GM12878 (cell line): ENCODE measurements at regions of chr11 and their contacts with region 1.

Region 1: GRCh38 chr11:22787551-22788162 is 41.9 kb downstream of the SVIP start:
- DNase-seq: no peak
- ATAC-seq: peak; percentile 52
- H3K4me3 ChIP-seq: no peak overlapping the region
- H3K27ac ChIP-seq: peak overlapping the region; percentile 63; the same call in 1 of the 2 replicates
- H3K4me1 ChIP-seq: peaks cover 13% of the 10 kb centered on the region
- H3K27me3 ChIP-seq: no peaks in the 10 kb centered on the region
- CTCF ChIP-seq: peak; percentile 60 to 81 (median 72)
- EP300 ChIP-seq: no peak
- POLR2A ChIP-seq: no peak
- RAD21 ChIP-seq: peak; percentile 90

Region 2: DNA sequence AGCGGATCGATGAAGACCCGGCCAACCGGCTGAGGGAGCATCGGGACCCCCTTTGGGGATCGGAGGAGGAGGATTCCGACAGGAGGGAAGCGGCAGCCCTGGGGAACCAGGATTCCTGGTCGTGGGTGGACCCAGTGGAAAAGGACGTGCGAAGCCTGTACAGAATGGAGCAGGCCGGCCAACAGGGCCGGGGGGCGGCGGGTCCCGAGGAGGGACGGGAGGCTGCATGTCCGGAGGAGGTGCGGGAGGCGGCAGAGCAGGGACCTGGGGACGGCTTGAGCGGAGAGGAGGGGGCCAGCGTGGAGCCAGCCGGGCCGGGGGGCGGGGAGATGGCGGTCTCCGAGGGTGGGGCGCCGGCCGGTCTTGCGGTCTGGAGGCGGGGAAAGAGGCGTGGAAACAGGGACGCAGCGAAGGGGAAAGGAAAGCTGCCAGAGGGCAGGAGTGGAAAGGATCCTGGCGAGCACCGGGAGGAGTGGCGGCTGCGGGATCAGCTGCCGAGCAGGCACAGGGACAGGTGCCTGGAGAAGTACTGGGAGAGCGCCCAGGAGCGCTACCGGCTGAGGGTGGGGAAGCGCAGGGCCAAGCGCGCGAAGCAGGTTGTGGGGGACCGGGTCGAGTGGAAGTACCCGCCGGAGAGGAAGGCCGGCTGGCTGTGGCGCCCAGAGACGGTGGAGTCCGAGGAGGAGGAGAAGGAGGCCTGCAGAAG is 594.9 kb before region 1 on chr11 and contains the start of gene ANO5:
- CTCF ChIA-PET with region 1: interaction called, 3 read pairs
- POLR2A ChIA-PET with region 1: no interaction called
- RAD21 ChIA-PET with region 1: no interaction called
- SMC1A ChIA-PET with region 1: interaction called, 4 read pairs
- in situ Hi-C with region 1: no loop called
- intact Hi-C with region 1: loop called (anchors 10 kb)
- DNase-seq: no peak
- ATAC-seq: peak; percentile 75
- H3K4me3 ChIP-seq: peak within 1 kb of the TSS; percentile 60
- H3K27ac ChIP-seq: no peak within 1 kb of the TSS
- H3K4me1 ChIP-seq: no peaks in the 10 kb centered on the region
- H3K27me3 ChIP-seq: no peaks in the 10 kb centered on the region
- CTCF ChIP-seq: no peak
- EP300 ChIP-seq: no peak
- POLR2A ChIP-seq: peak; percentile 48; the same call in 1 of the 2 replicates
- RAD21 ChIP-seq: no peak
- polyA plus RNA-seq, gene ANO5: 1.6 to 3.1 TPM

Region 3: GRCh38 chr11:22567759-22568158 is 219.9 kb before region 1 on chr11:
- CTCF ChIA-PET with region 1: no interaction called
- POLR2A ChIA-PET with region 1: no interaction called
- RAD21 ChIA-PET with region 1: no interaction called
- SMC1A ChIA-PET with region 1: no interaction called
- in situ Hi-C with region 1: no loop called
- intact Hi-C with region 1: no loop called
- DNase-seq: no peak
- ATAC-seq: no peak
- H3K4me3 ChIP-seq: no peak overlapping the region
- H3K27ac ChIP-seq: no peak overlapping the region
- H3K4me1 ChIP-seq: no peaks in the 10 kb centered on the region
- H3K27me3 ChIP-seq: no peaks in the 10 kb centered on the region
- CTCF ChIP-seq: no peak
- EP300 ChIP-seq: no peak
- POLR2A ChIP-seq: no peak
- RAD21 ChIP-seq: no peak

Region 4: DNA sequence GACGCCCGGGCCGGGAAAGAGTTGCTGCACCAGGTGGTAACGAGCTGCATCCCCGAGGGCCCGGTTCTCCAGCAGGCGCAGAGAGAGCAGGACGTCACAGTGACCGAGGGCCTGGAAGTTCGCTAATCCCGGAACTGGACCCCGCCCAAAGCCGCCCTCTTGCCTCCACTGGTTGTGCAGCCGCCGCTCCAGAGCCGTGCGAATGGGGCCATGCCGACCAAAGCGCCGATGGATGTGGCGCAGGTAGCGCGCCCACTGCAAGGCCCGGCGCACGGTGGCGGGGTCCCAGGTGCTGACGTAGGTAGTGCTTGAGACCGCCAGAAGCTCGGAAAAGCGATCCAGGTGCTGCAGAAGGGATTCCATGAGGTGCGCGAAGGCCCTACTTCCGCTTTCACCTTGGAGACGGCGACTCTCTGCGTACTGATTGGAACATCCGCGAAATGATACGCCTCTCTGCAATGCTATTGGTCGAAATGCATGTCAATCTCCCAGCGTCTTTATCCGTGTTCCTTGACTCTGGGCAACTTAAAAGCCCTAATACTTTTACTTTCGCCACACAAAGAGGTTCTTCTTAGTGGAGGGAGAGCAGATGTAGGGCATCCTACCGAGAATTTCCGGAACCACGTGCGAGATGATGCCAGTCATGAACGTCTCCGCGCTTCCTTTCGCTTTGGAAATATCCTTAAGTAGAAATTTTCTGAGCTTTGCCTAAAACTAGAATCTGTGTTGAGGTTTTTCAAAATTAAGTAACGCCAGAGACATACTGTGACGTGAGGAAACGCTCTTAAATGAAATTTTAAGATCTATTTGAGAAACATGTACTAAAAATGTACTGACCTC is 162.0 kb before region 1 on chr11 and contains the start of gene FANCF:
- CTCF ChIA-PET with region 1: interaction called, 23 read pairs
- POLR2A ChIA-PET with region 1: interaction called, 11 read pairs
- RAD21 ChIA-PET with region 1: interaction called, 4 read pairs
- SMC1A ChIA-PET with region 1: interaction called, 7 read pairs
- in situ Hi-C with region 1: no loop called
- intact Hi-C with region 1: loop called (anchors 2 kb)
- DNase-seq: peak; percentile 100
- ATAC-seq: peak; percentile 95
- H3K4me3 ChIP-seq: peak within 1 kb of the TSS; percentile 85
- H3K27ac ChIP-seq: peak within 1 kb of the TSS; percentile 90
- H3K4me1 ChIP-seq: peaks cover 6% of the 10 kb centered on the region; the same call in 1 of the 2 replicates
- H3K27me3 ChIP-seq: no peaks in the 10 kb centered on the region
- CTCF ChIP-seq: no peak
- EP300 ChIP-seq: no peak
- POLR2A ChIP-seq: peak; percentile 81
- RAD21 ChIP-seq: no peak
- polyA plus RNA-seq, gene FANCF: 1.6 to 3.4 TPM

Region 5: GRCh38 chr11:22677153-22677903 is 110.3 kb before region 1 on chr11:
- CTCF ChIA-PET with region 1: interaction called, 135 read pairs
- POLR2A ChIA-PET with region 1: interaction called, 4 read pairs
- RAD21 ChIA-PET with region 1: interaction called, 103 read pairs
- SMC1A ChIA-PET with region 1: interaction called, 251 read pairs
- in situ Hi-C with region 1: loop called (anchors 10 kb)
- intact Hi-C with region 1: no loop called
- DNase-seq: no peak
- ATAC-seq: peak; percentile 55
- H3K4me3 ChIP-seq: no peak overlapping the region
- H3K27ac ChIP-seq: no peak overlapping the region; the same call in 1 of the 2 replicates
- H3K4me1 ChIP-seq: no peaks in the 10 kb centered on the region
- H3K27me3 ChIP-seq: no peaks in the 10 kb centered on the region
- CTCF ChIP-seq: no peak
- EP300 ChIP-seq: no peak
- POLR2A ChIP-seq: no peak
- RAD21 ChIP-seq: no peak

Region 6: GRCh38 chr11:22725079-22725478 is 62.6 kb before region 1 on chr11:
- CTCF ChIA-PET with region 1: interaction called, 31 read pairs
- POLR2A ChIA-PET with region 1: interaction called, 3 read pairs
- RAD21 ChIA-PET with region 1: interaction called, 59 read pairs
- SMC1A ChIA-PET with region 1: interaction called, 49 read pairs
- in situ Hi-C with region 1: no loop called
- intact Hi-C with region 1: loop called (anchors 2 kb)
- DNase-seq: no peak
- ATAC-seq: no peak
- H3K4me3 ChIP-seq: no peak overlapping the region
- H3K27ac ChIP-seq: no peak overlapping the region
- H3K4me1 ChIP-seq: no peaks in the 10 kb centered on the region
- H3K27me3 ChIP-seq: no peaks in the 10 kb centered on the region
- CTCF ChIP-seq: no peak
- EP300 ChIP-seq: no peak
- POLR2A ChIP-seq: no peak
- RAD21 ChIP-seq: no peak

Region 7: GRCh38 chr11:22774716-22775115 is 12.9 kb before region 1 on chr11:
- CTCF ChIA-PET with region 1: interaction called, 77 read pairs
- POLR2A ChIA-PET with region 1: interaction called, 17 read pairs
- RAD21 ChIA-PET with region 1: interaction called, 47 read pairs
- SMC1A ChIA-PET with region 1: interaction called, 41 read pairs
- in situ Hi-C with region 1: no loop called
- intact Hi-C with region 1: no loop called
- DNase-seq: no peak
- ATAC-seq: peak; percentile 64
- H3K4me3 ChIP-seq: 0 out of 2 replicates have a peak overlapping the region, but pooled peaks have one; percentile 26
- H3K27ac ChIP-seq: peak overlapping the region; percentile 45
- H3K4me1 ChIP-seq: peaks cover 3% of the 10 kb centered on the region; the same call in 1 of the 2 replicates
- H3K27me3 ChIP-seq: no peaks in the 10 kb centered on the region
- CTCF ChIP-seq: no peak
- EP300 ChIP-seq: no peak
- POLR2A ChIP-seq: no peak
- RAD21 ChIP-seq: no peak

Region 8: GRCh38 chr11:22875869-22876473 is 88.3 kb after region 1 on chr11:
- CTCF ChIA-PET with region 1: interaction called, 18 read pairs
- POLR2A ChIA-PET with region 1: no interaction called
- RAD21 ChIA-PET with region 1: interaction called, 3 read pairs
- SMC1A ChIA-PET with region 1: no interaction called
- in situ Hi-C with region 1: no loop called
- intact Hi-C with region 1: no loop called
- DNase-seq: peak; percentile 38
- ATAC-seq: peak; percentile 100
- H3K4me3 ChIP-seq: no peak overlapping the region
- H3K27ac ChIP-seq: no peak overlapping the region
- H3K4me1 ChIP-seq: no peaks in the 10 kb centered on the region
- H3K27me3 ChIP-seq: no peaks in the 10 kb centered on the region
- CTCF ChIP-seq: peak; percentile 54 to 89 (median 68)
- EP300 ChIP-seq: no peak
- POLR2A ChIP-seq: no peak
- RAD21 ChIP-seq: peak; percentile 83